ENCODE measurements at regions of chr17 and their contacts with region 1.

Region 1: DNA sequence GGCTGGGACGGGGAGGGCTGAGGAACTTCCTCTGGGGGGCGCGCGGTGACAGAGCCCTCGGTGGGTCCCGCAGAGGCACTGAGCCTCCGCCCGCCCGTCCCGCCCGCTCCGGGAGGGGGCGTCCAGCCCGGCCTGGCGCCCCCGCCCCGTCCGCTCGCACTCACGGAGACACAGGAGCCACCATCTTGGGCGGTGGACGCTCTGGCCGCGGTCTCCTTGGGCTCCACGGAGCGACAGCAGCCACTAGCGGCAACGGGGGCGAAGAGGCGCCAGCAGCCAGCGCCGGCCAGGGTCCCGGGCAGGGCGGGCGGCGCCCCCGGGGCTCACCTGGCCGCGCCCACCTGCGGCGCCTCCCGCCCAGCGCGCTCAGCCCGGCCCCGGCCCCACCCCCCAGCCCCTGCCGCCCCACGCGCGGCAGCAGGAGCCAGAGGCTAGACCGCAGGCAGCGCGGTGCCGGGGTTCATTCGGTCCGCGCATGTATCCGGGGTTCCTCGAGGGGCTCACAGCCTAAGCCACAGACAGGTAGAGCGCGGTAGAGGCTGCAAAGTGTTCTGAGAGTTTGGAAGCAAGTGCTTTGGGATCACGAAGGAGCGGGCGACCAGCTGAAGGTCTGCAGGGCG is at the start of gene C17orf113:
- DNase-seq: peak; percentile 83 to 89
- H3K4me3 ChIP-seq: peak within 1 kb of the TSS; percentile 65
- H3K4me3 Mint-ChIP-seq: peak within 1 kb of the TSS; percentile 92
- H3K27ac Mint-ChIP-seq: peak within 1 kb of the TSS; percentile 63
- H3K4me1 ChIP-seq: peaks cover 16% of the 10 kb centered on the region
- H3K4me1 Mint-ChIP-seq: peaks cover 26% of the 10 kb centered on the region
- H3K27me3 ChIP-seq: no peaks in the 10 kb centered on the region
- H3K27me3 Mint-ChIP-seq: no peaks in the 10 kb centered on the region
- CTCF ChIP-seq: peak; percentile 58 to 63
- total RNA-seq, gene C17orf113: 3.8 and 4.7 TPM in 2 replicates

Region 2: GRCh38 chr17:42002792-42003301 is 47.7 kb before region 1 on chr17:
- CTCF ChIA-PET with region 1: no interaction called
- POLR2A ChIA-PET with region 1: no interaction called
- intact Hi-C with region 1: no loop called
- DNase-seq: peak in 1 of 2 experiments; percentile 67
- H3K4me3 ChIP-seq: 0 out of 2 replicates have a peak overlapping the region, but pooled peaks have one; percentile 1
- H3K4me3 Mint-ChIP-seq: peak overlapping the region; percentile 68
- H3K27ac Mint-ChIP-seq: peak overlapping the region; percentile 92
- H3K4me1 ChIP-seq: peaks cover 49% of the 10 kb centered on the region
- H3K4me1 Mint-ChIP-seq: peaks cover 26% of the 10 kb centered on the region
- H3K27me3 ChIP-seq: no peaks in the 10 kb centered on the region
- H3K27me3 Mint-ChIP-seq: no peaks in the 10 kb centered on the region
- CTCF ChIP-seq: no peak

Region 3: DNA sequence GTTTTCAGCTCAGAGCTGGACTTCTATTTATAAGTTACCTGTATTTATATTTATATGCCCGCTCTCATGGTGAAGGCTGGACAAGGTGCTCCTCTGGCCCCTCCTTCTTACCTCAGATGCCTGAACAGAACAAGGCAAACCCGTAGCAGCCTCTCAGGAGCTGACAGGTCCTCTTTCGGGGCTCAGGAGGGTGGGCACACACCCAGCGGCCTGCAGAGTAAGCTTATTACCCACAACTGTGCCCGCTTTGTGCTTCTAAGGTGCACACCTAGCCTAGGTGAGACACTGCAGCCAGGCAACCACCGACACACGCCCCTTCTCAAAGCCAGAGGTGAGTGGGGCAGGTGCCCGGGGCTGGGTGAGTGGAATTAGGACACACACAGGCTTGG is 25.3 kb before region 1 on chr17:
- CTCF ChIA-PET with region 1: interaction called, 4 read pairs
- POLR2A ChIA-PET with region 1: interaction called, 3 read pairs
- intact Hi-C with region 1: loop called (anchors 1 kb)
- DNase-seq: no peak
- H3K4me3 ChIP-seq: no peak overlapping the region
- H3K4me3 Mint-ChIP-seq: peak overlapping the region; percentile 25
- H3K27ac Mint-ChIP-seq: peak overlapping the region; percentile 58
- H3K4me1 ChIP-seq: peaks cover 21% of the 10 kb centered on the region
- H3K4me1 Mint-ChIP-seq: peaks cover 28% of the 10 kb centered on the region
- H3K27me3 ChIP-seq: no peaks in the 10 kb centered on the region
- H3K27me3 Mint-ChIP-seq: no peaks in the 10 kb centered on the region
- CTCF ChIP-seq: no peak

Measured in Caco-2 (cell line).